PC-9 (cell line): ENCODE measurements at regions of chr12 and their contacts with region 1.

Region 1: GRCh38 chr12:49828133-49829091 is at the start of gene NCKAP5L:
- DNase-seq: peak; percentile 82 to 94
- H3K4me3 ChIP-seq: peak within 1 kb of the TSS; percentile 84
- H3K27ac ChIP-seq: peak within 1 kb of the TSS; percentile 20; the same call in 1 of the 2 replicates
- H3K4me1 ChIP-seq: peaks cover 25% of the 10 kb centered on the region
- H3K27me3 ChIP-seq: no peaks in the 10 kb centered on the region
- CTCF ChIP-seq: no peak
- total RNA-seq, gene NCKAP5L: 20.5 and 20.9 TPM in 2 replicates

Region 2: DNA sequence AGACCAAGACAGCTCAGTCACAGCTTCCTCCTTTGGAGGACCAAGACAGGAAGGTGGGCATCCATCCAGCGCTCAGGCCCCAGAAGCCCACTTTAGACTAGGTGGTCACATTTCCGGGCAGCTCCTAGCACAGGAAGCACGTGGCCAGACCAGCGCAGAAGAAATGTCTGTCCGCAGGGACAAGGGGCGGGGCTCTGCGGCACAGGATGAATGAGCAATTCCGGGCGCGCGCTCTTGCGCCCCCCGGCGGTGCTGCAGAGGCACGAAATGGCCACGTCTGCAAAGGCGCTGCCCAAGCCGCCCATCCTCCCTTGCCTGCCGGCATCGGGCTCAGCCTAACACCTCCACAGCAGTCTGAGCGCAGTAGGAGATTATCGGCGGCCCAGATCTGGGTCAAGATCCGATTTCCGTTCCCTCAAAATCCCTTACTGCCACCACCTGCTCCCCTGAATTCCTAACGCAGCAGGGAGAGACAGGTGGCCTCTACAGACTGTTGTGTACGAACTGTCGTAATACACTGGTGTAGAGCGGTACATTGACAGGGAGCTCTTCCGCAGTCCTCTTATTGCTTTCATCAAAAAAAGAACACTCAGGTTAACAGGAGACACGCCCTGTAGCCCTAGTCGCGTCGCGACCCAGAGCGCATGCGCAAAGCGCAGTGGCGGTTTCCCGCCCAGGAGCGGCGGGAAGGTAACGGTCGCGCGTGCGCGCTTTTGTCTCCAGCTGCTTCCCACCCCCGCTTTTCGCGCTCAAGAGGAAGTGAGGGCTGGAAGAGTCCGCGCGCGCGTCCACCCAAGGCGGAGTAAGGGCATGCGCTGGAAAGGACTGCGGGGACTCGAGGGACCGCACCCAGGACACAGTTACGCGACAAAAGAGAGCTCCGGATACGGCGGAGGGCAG is 698.0 kb before region 1 on chr12:
- CTCF ChIA-PET with region 1: no interaction called
- POLR2A ChIA-PET with region 1: no interaction called
- intact Hi-C with region 1: no loop called
- DNase-seq: peak; percentile 83 to 89
- H3K4me3 ChIP-seq: peak overlapping the region; percentile 84
- H3K27ac ChIP-seq: peak overlapping the region; percentile 94
- H3K4me1 ChIP-seq: peaks cover 26% of the 10 kb centered on the region
- H3K27me3 ChIP-seq: no peaks in the 10 kb centered on the region
- CTCF ChIP-seq: peak; percentile 82

Region 3: DNA sequence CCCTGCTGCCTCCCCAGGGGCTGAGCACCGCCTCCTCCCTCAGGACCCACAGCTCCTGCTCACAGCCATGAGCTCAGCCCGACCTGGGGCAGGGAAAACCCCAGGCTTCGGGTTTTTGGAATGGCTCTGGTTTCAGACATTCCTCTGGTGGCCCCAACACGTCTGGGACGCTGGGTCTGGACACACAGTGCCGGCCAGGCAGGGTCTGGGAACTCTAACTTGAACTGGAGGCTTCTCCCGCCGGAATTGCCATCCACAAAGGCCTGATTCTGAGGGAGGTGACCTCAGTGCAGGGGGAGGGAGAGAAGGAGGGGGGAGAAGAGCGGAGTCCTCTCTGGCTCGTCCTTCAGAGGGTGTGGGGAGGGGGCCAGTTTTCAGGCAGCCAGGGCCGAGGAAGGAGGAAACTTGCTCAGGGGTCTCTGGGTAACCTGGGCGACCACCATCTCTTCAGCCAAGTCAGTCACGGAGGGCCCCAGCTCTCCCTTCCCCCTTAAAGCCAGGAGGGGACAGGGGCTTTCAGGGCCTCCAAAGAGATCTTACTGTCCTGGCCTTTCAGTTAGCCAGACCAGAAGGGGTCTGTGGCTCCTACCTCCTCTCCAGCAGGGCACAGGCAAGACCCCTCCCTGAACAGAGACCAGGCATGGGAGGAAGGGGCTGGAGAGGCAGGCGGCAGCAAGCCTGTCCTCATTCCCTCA is 19.6 kb before region 1 on chr12:
- CTCF ChIA-PET with region 1: interaction called, 3 read pairs
- POLR2A ChIA-PET with region 1: interaction called, 24 read pairs
- intact Hi-C with region 1: no loop called
- DNase-seq: no peak
- H3K4me3 ChIP-seq: no peak overlapping the region
- H3K27ac ChIP-seq: no peak overlapping the region
- H3K4me1 ChIP-seq: no peaks in the 10 kb centered on the region
- H3K27me3 ChIP-seq: no peaks in the 10 kb centered on the region
- CTCF ChIP-seq: no peak

Region 4: DNA sequence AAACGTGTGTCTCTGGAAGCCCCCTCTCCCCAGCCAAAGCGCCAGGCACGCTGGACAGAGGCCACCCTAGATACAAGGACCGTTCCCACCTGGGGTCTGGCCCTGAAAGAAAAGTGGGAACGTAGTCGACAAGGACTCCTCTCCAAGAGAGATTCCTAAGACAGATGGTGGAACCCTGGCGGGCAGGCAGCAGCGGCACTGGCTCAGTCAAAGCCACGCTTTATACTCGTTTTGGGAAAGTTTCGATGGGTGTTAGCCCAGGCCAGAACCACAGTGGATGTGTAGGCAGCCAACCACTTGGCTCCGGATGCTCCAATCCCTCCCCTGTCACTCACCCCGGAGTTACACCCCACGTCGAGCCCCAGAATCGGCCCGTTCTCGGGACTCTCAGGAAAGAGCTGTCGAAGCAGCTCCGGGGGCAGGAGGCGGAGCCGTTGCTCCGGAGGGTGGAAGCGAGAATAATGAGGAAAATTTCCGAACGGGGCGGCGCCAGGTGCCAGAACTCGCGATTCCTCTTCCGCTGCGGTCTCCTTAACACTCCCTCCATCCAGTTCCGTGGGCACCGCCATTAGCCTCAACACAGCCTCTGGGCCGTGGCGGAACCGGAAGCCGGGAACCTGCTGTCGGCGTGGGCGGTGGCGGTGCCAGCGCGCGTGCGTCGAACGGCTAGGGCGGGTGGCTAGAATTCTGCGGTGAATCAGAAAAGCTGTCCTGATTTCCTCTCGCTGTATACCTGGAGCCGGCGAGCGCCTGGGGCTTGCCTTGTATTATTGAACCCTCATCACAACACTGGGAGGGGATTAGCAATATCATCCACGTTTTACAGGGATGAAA is 14.3 kb after region 1 on chr12 and contains the start of gene BCDIN3D:
- CTCF ChIA-PET with region 1: interaction called, 12 read pairs
- POLR2A ChIA-PET with region 1: interaction called, 7 read pairs
- intact Hi-C with region 1: no loop called
- DNase-seq: peak; percentile 89 to 92
- H3K4me3 ChIP-seq: peak within 1 kb of the TSS; percentile 69
- H3K27ac ChIP-seq: peak within 1 kb of the TSS; percentile 77
- H3K4me1 ChIP-seq: peaks cover 21% of the 10 kb centered on the region
- H3K27me3 ChIP-seq: no peaks in the 10 kb centered on the region
- CTCF ChIP-seq: no peak
- total RNA-seq, gene BCDIN3D: 2.5 and 4.7 TPM in 2 replicates

Region 5: DNA sequence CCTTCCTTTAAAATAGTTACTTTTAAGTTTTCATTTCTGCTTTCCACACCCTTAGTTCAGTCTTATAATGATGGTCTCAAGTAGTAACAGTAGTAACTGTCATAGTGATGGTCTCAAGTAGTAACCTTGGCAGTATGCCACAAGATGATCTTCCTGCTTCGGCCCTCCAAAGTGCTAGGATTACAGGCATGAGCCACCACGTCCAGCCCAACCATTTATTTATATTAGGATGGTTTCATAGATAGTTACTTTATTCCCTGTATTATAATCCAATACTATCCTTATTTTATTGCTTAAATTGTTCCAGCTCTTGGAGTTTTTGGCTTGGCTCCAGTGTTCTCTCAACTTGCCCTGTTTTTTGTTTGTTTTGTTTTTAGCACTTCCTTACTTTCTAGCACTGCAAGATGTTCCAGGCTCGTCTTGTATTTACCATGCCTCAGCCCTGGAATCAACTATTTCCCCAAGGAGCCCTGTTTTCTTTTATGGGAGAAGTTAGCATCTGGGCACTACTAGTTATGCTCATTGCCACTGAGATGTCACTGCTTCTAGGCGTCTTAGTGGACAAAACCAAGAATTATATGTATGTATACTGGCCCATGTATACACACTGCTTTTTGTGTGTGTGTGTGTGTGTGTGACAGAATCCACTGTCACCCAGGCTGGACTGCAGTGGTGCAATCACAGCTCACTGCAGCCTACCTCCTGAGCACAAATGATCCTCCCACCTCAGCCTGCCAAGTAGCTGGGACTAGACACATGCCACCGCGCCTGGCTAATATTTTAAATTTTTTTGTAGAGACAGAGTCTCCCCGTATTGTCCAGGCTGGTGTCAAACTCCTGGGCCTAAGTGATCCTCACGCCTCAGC is 429.5 kb after region 1 on chr12:
- CTCF ChIA-PET with region 1: no interaction called
- POLR2A ChIA-PET with region 1: interaction called, 18 read pairs
- intact Hi-C with region 1: no loop called
- DNase-seq: no peak
- H3K4me3 ChIP-seq: no peak overlapping the region
- H3K27ac ChIP-seq: peak overlapping the region; percentile 98
- H3K4me1 ChIP-seq: peaks cover 73% of the 10 kb centered on the region
- H3K27me3 ChIP-seq: no peaks in the 10 kb centered on the region
- CTCF ChIP-seq: no peak